HCT116 (cell line): ENCODE measurements at regions of chr3 and their contacts with region 1.

Region 1: DNA sequence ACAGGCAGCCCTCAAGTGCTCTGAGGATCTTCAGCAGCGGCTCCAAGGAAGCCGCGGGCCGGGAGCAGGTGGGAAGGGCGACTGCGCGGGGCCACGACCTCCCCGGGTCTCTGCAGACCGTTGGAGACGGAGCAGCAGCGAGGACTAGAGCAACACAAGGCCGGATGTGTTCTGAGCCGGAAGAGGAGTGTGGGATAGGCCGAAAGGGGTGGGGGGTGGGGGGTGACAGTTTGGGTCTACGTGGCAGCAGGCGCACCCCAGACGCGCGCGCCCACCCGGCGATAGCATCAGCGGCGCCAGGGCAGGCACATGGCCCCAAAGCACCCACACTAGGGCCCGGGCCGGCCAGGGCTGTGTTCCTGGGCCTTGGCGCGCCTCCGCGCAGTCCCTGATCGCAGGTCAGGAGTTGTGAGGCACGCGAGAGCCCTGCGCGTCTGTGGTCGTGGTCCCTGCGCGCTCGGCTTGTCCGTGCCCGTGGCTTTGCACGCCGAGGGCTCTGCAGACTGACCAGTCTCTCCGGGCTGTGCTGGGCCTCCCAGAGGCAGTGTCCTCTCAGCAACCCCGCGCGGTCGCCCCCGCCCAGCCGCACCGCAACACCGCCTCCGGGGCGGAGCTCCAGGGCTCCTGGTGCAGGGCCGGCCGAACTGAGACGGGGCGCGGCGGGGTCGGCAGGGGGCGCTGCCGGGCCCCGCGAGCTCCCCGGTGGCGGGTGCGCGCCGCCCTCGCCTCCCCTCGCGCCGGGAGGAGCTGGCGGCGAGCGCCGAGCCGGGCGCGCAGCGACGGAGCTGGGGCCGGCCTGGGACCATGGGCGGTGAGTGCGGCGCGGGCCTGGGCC is at the start of gene PXYLP1:
- DNase-seq: peak; percentile 36
- ATAC-seq: peak; percentile 95
- H3K4me3 ChIP-seq: peak within 1 kb of the TSS; percentile 67 to 69
- H3K27ac ChIP-seq: peak within 1 kb of the TSS; percentile 55; the same call in 1 of the 2 replicates
- H3K4me1 ChIP-seq: peaks cover 7 to 14% of the 10 kb centered on the region in 2 experiments; a peak in 3 of 4 replicates
- H3K27me3 ChIP-seq: no peaks in the 10 kb centered on the region
- CTCF ChIP-seq: peak; percentile 34 to 51 (median 36); a peak in 5 of 6 replicates
- POLR2A ChIP-seq: peak; percentile 49
- RAD21 ChIP-seq: 0 out of 2 replicates have a peak, but pooled peaks have one; percentile 18
- total RNA-seq, gene PXYLP1: 15.3 TPM

Region 2: GRCh38 chr3:141250342-141250741 is 19.0 kb after region 1 on chr3:
- CTCF ChIA-PET with region 1: interaction called, 26 read pairs
- POLR2A ChIA-PET with region 1: interaction called, 4 read pairs
- RAD21 ChIA-PET with region 1: no interaction called
- intact Hi-C with region 1: no loop called
- DNase-seq: no peak
- ATAC-seq: peak; percentile 64
- H3K4me3 ChIP-seq: no peak overlapping the region
- H3K27ac ChIP-seq: no peak overlapping the region
- H3K4me1 ChIP-seq: no peaks in the 10 kb centered on the region
- H3K27me3 ChIP-seq: no peaks in the 10 kb centered on the region
- CTCF ChIP-seq: no peak
- POLR2A ChIP-seq: no peak
- RAD21 ChIP-seq: no peak

Region 3: GRCh38 chr3:141255846-141256261 is 24.5 kb after region 1 on chr3:
- CTCF ChIA-PET with region 1: interaction called, 13 read pairs
- POLR2A ChIA-PET with region 1: no interaction called
- RAD21 ChIA-PET with region 1: no interaction called
- intact Hi-C with region 1: no loop called
- DNase-seq: no peak
- ATAC-seq: peak; percentile 86
- H3K4me3 ChIP-seq: no peak overlapping the region
- H3K27ac ChIP-seq: no peak overlapping the region
- H3K4me1 ChIP-seq: no peaks in the 10 kb centered on the region
- H3K27me3 ChIP-seq: no peaks in the 10 kb centered on the region
- CTCF ChIP-seq: peak in 2 of 3 experiments; percentile 23 to 32; a peak in 2 of 6 replicates
- POLR2A ChIP-seq: no peak
- RAD21 ChIP-seq: peak; percentile 21; the same call in 1 of the 2 replicates